ENCODE measurements at regions of chr11 and their contacts with region 1.

Region 1: DNA sequence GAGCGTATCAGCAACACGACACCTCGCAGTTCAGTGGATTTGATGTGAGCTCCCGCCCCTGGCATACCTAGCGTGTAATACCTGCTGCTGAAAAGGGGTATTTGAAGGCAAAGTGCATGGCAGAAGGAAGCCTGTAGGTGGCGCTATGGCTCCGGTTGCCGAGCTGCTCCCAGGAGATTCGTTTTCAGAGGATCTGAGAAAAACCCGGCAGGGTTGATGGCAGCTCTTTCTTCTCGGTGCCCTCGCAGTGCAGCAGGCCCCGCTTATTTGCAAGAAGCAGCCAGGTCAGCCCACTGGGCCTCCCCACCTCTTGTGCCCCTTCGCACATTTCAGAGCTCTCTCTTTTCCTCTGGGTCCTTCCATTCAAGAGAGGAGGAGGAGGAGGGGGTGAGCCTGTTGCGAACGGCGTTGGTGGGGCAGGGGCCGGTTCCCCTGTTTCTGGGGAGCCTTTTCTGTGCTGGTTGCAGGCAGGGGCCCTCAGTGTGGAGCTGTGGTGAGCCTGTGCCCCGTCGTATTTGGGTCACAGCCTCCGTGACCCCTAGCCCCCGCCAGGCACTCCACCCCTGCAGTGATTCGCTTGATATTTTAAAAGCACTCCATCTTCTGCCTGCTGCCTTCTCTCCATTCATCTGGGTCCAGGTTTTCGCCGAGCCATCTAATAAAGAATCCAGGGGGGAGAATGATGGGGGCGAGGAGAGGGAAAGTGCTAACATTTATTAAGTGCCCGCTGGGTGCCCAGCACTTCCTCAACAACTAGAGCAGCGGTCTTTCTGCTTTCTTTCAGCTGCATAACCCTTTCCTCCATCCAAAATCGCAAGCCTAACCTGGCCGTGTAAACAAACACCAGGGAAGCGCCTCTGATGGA is 85.3 kb upstream of the SYT13 start:
- DNase-seq: peak; percentile 38 to 84 (median 54)
- ATAC-seq: peak; percentile 68
- H3K4me3 ChIP-seq: no peak overlapping the region
- H3K4me3 Mint-ChIP-seq: no peak overlapping the region
- H3K27ac ChIP-seq: no peak overlapping the region
- H3K27ac Mint-ChIP-seq: no peak overlapping the region
- H3K4me1 ChIP-seq: peaks cover 34% of the 10 kb centered on the region
- H3K4me1 Mint-ChIP-seq: peaks cover 33% of the 10 kb centered on the region
- H3K27me3 ChIP-seq: no peaks in the 10 kb centered on the region
- H3K27me3 Mint-ChIP-seq: peaks cover 28% of the 10 kb centered on the region
- CTCF ChIP-seq: peak; percentile 66

Region 2: GRCh38 chr11:44519989-44520737 is 851.3 kb before region 1 on chr11:
- CTCF ChIA-PET with region 1: no interaction called
- POLR2A ChIA-PET with region 1: no interaction called
- intact Hi-C with region 1: no loop called
- DNase-seq: no peak
- ATAC-seq: no peak
- H3K4me3 ChIP-seq: no peak overlapping the region
- H3K4me3 Mint-ChIP-seq: no peak overlapping the region
- H3K27ac ChIP-seq: no peak overlapping the region
- H3K27ac Mint-ChIP-seq: no peak overlapping the region
- H3K4me1 ChIP-seq: peaks cover 6% of the 10 kb centered on the region
- H3K4me1 Mint-ChIP-seq: peaks cover 5% of the 10 kb centered on the region
- H3K27me3 ChIP-seq: peaks cover 0 to 6% of the 10 kb centered on the region in 2 experiments
- H3K27me3 Mint-ChIP-seq: peaks cover 51% of the 10 kb centered on the region
- CTCF ChIP-seq: no peak

Region 3: DNA sequence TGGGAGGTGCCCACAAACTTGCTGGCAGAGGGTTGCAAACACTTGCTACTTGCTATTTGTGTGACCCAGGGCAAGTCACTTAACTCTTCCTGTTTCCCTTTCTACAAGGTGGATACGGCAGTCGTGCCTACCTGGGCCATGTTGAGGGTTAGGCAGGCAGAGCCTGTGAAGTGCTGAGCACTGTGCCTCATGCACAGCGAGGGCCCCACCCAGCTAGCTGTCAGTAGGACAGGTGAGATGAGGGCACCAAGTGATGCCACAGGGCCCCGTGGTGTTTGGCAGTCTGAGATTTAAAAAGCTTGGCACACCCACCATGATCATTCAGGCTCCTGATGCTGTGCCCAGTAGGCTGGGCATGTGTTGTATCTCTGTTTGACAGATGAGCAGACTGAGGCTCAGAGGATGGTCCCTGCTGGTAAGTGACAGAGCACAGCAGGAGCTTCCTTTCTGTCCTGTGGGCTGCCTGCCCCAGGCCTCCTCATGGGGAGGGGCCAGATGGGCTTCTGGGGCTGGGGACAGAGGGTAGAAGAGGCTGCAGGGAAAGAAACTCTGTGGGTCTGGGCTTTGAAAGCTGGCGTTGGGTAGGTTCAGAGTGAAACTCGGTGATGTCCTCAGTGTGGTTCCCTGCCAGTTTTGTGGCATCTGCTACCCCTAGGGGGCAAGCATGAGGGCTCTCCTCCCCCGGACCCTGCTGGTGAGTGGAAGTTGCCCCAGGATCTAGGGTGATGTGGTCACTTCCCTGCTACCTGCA is 585.5 kb before region 1 on chr11:
- CTCF ChIA-PET with region 1: interaction called, 3 read pairs
- POLR2A ChIA-PET with region 1: no interaction called
- intact Hi-C with region 1: loop called in 1 of 2 experiments (anchors 5 kb)
- DNase-seq: no peak
- ATAC-seq: no peak
- H3K4me3 ChIP-seq: no peak overlapping the region
- H3K4me3 Mint-ChIP-seq: no peak overlapping the region
- H3K27ac ChIP-seq: no peak overlapping the region
- H3K27ac Mint-ChIP-seq: no peak overlapping the region
- H3K4me1 ChIP-seq: peaks cover 14% of the 10 kb centered on the region
- H3K4me1 Mint-ChIP-seq: no peaks in the 10 kb centered on the region
- H3K27me3 ChIP-seq: no peaks in the 10 kb centered on the region
- H3K27me3 Mint-ChIP-seq: no peaks in the 10 kb centered on the region
- CTCF ChIP-seq: no peak

Region 4: GRCh38 chr11:45655347-45655756 is 283.9 kb after region 1 on chr11:
- CTCF ChIA-PET with region 1: interaction called, 8 read pairs
- POLR2A ChIA-PET with region 1: no interaction called
- intact Hi-C with region 1: loop called (anchors 1 kb)
- DNase-seq: peak; percentile 27 to 72 (median 48)
- ATAC-seq: peak; percentile 48
- H3K4me3 ChIP-seq: no peak overlapping the region
- H3K4me3 Mint-ChIP-seq: no peak overlapping the region
- H3K27ac ChIP-seq: no peak overlapping the region
- H3K27ac Mint-ChIP-seq: no peak overlapping the region
- H3K4me1 ChIP-seq: peaks cover 7% of the 10 kb centered on the region
- H3K4me1 Mint-ChIP-seq: peaks cover 6% of the 10 kb centered on the region
- H3K27me3 ChIP-seq: peaks cover 10 to 14% of the 10 kb centered on the region in 2 experiments
- H3K27me3 Mint-ChIP-seq: peaks cover 51% of the 10 kb centered on the region
- CTCF ChIP-seq: peak; percentile 80